Mammary epithelial cell (primary cell): ENCODE measurements at regions of chr13 and their contacts with region 1.

Region 1: GRCh38 chr13:81473366-81473899 is 1132.5 kb upstream of the SPRY2 start:
- DNase-seq: peak; percentile 68
- H3K4me3 ChIP-seq: no peak overlapping the region
- H3K27ac ChIP-seq: peak overlapping the region; percentile 54
- H3K4me1 ChIP-seq: peaks cover 15% of the 10 kb centered on the region
- H3K27me3 ChIP-seq: no peaks in the 10 kb centered on the region
- CTCF ChIP-seq: no peak

Region 2: DNA sequence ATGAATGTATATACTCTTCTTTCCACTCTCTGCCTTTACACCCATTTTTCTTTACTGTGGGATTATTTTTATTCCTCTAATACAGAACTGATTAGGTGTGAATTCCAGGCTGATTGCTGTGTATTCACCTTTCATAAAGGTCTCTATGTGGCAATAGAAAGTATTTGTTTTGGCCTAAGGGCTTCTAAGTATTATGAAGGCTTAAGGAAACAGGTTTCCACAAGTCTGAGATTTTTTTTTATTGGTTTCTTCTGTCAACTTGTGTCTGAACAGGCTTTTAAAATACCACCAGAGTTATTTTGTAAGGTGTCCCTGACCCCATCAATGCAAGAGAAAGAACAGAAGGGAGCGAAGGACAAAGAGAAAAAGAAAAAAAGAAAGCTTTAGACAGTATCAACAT is 30.5 kb before region 1 on chr13:
- CTCF ChIA-PET with region 1: no interaction called
- dilution Hi-C with region 1: no loop called
- in situ Hi-C with region 1: no loop called
- intact Hi-C with region 1: loop called (anchors 2 kb)
- DNase-seq: peak; percentile 73
- H3K4me3 ChIP-seq: no peak overlapping the region
- H3K27ac ChIP-seq: peak overlapping the region; percentile 35
- H3K4me1 ChIP-seq: peaks cover 30% of the 10 kb centered on the region
- H3K27me3 ChIP-seq: no peaks in the 10 kb centered on the region
- CTCF ChIP-seq: no peak